ENCODE measurements at regions of chr6 and their contacts with region 1.

Region 1: GRCh38 chr6:160992061-160992979 is 751 bp downstream of the MAP3K4 start:
- DNase-seq: peak; percentile 53 to 81 (median 72)
- ATAC-seq: peak; percentile 65 to 74
- H3K4me3 ChIP-seq: peak overlapping the region; percentile 52
- H3K27ac ChIP-seq: peak overlapping the region; percentile 96
- H3K4me1 ChIP-seq: peaks cover 7% of the 10 kb centered on the region
- H3K27me3 ChIP-seq: no peaks in the 10 kb centered on the region

Region 2: GRCh38 chr6:160930547-160931377 is 61.6 kb before region 1 on chr6:
- intact Hi-C with region 1: loop called (anchors 5 kb)
- DNase-seq: peak; percentile 74 to 93 (median 90)
- ATAC-seq: peak; percentile 94
- H3K4me3 ChIP-seq: peak overlapping the region; percentile 51
- H3K27ac ChIP-seq: no peak overlapping the region
- H3K4me1 ChIP-seq: no peaks in the 10 kb centered on the region
- H3K27me3 ChIP-seq: no peaks in the 10 kb centered on the region

Region 3: DNA sequence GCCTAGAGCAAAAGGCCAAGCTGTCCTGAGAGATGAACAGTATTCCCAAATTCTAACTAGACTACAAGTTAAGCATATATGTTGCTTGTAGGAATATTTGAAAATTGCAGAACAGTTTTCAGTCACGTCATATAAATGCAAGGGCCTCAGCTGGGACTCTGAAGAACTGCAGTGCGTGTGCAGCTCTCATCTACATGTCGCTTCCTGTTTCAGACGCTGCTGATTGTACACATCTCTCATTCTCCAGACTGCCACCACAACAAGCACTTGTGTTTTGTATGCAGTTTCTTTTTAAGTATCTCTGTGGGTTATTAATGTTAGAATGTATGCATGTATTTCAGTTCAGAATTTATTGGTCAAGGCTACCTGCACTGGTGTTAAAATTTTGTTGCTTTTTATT is 118.9 kb after region 1 on chr6:
- intact Hi-C with region 1: no loop called
- DNase-seq: no peak
- ATAC-seq: no peak
- H3K4me3 ChIP-seq: no peak overlapping the region
- H3K27ac ChIP-seq: no peak overlapping the region
- H3K4me1 ChIP-seq: no peaks in the 10 kb centered on the region
- H3K27me3 ChIP-seq: no peaks in the 10 kb centered on the region